ENCODE measurements at regions of chr15 and their contacts with region 1.

Region 1: GRCh38 chr15:93018580-93018979 is 70.4 kb downstream of the RGMA start:
- DNase-seq: no peak
- H3K4me3 Mint-ChIP-seq: no peak overlapping the region
- H3K27ac Mint-ChIP-seq: peak overlapping the region; percentile 83
- H3K4me1 Mint-ChIP-seq: peaks cover 68% of the 10 kb centered on the region
- H3K27me3 Mint-ChIP-seq: no peaks in the 10 kb centered on the region

Region 2: GRCh38 chr15:92724144-92724543 is 294.4 kb before region 1 on chr15:
- CTCF ChIA-PET with region 1: no interaction called
- POLR2A ChIA-PET with region 1: no interaction called
- intact Hi-C with region 1: no loop called
- DNase-seq: no peak
- H3K4me3 Mint-ChIP-seq: no peak overlapping the region
- H3K27ac Mint-ChIP-seq: no peak overlapping the region
- H3K4me1 Mint-ChIP-seq: peaks cover 5% of the 10 kb centered on the region
- H3K27me3 Mint-ChIP-seq: peaks cover 16% of the 10 kb centered on the region

Region 3: GRCh38 chr15:92797168-92797951 is 221.2 kb before region 1 on chr15:
- CTCF ChIA-PET with region 1: interaction called, 36 read pairs
- POLR2A ChIA-PET with region 1: no interaction called
- intact Hi-C with region 1: no loop called
- DNase-seq: no peak
- H3K4me3 Mint-ChIP-seq: no peak overlapping the region
- H3K27ac Mint-ChIP-seq: peak overlapping the region; percentile 69
- H3K4me1 Mint-ChIP-seq: peaks cover 9% of the 10 kb centered on the region
- H3K27me3 Mint-ChIP-seq: no peaks in the 10 kb centered on the region

Region 4: GRCh38 chr15:92938387-92938786 is 80.2 kb before region 1 on chr15:
- CTCF ChIA-PET with region 1: no interaction called
- POLR2A ChIA-PET with region 1: no interaction called
- intact Hi-C with region 1: loop called (anchors 5 kb)
- DNase-seq: no peak
- H3K4me3 Mint-ChIP-seq: no peak overlapping the region
- H3K27ac Mint-ChIP-seq: peak overlapping the region; percentile 33
- H3K4me1 Mint-ChIP-seq: peaks cover 69% of the 10 kb centered on the region
- H3K27me3 Mint-ChIP-seq: no peaks in the 10 kb centered on the region

Region 5: DNA sequence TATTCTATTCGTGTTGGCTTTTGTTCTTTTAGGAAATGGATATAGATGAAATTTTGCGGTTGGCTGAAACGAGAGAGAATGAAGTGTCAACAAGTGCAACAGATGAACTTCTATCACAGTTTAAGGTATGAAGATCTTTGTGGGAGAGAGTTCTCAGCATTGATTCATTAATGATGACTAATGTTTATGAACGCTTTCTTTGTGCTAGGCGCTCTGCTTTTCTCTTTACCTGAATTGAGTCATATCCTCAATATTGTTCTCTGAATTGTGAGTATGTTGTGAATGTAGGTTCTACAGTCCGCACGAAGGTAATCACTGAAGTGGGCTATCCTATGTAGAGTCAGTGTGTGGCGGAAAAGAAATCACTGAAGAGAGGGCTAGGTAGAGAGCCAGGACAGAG is 37.2 kb before region 1 on chr15:
- CTCF ChIA-PET with region 1: interaction called, 4 read pairs
- POLR2A ChIA-PET with region 1: no interaction called
- intact Hi-C with region 1: loop called (anchors 2 kb)
- DNase-seq: no peak
- H3K4me3 Mint-ChIP-seq: peak overlapping the region; percentile 12
- H3K27ac Mint-ChIP-seq: no peak overlapping the region
- H3K4me1 Mint-ChIP-seq: peaks cover 11% of the 10 kb centered on the region
- H3K27me3 Mint-ChIP-seq: no peaks in the 10 kb centered on the region